Natural killer cell (primary cell): ENCODE measurements at regions of chr13 and their contacts with region 1.

Region 1: GRCh38 chr13:41132512-41133152 is at the start of gene KBTBD6:
- DNase-seq: peak; percentile 86 to 95
- ATAC-seq: peak; percentile 97 to 99 (median 98)
- H3K4me3 ChIP-seq: peak within 1 kb of the TSS; percentile 96
- H3K4me3 Mint-ChIP-seq: peak within 1 kb of the TSS; percentile 98
- H3K27ac ChIP-seq: peak within 1 kb of the TSS; percentile 72
- H3K27ac Mint-ChIP-seq: peak within 1 kb of the TSS; percentile 93 to 96
- H3K4me1 ChIP-seq: peaks cover 14% of the 10 kb centered on the region
- H3K4me1 Mint-ChIP-seq: peaks cover 40 to 41% of the 10 kb centered on the region in 2 donors
- H3K27me3 ChIP-seq: no peaks in the 10 kb centered on the region
- H3K27me3 Mint-ChIP-seq: no peaks in the 10 kb centered on the region
- CTCF ChIP-seq: no peak
- total RNA-seq, gene KBTBD6: 1.7 to 3.2 (median 3.1) TPM

Region 2: DNA sequence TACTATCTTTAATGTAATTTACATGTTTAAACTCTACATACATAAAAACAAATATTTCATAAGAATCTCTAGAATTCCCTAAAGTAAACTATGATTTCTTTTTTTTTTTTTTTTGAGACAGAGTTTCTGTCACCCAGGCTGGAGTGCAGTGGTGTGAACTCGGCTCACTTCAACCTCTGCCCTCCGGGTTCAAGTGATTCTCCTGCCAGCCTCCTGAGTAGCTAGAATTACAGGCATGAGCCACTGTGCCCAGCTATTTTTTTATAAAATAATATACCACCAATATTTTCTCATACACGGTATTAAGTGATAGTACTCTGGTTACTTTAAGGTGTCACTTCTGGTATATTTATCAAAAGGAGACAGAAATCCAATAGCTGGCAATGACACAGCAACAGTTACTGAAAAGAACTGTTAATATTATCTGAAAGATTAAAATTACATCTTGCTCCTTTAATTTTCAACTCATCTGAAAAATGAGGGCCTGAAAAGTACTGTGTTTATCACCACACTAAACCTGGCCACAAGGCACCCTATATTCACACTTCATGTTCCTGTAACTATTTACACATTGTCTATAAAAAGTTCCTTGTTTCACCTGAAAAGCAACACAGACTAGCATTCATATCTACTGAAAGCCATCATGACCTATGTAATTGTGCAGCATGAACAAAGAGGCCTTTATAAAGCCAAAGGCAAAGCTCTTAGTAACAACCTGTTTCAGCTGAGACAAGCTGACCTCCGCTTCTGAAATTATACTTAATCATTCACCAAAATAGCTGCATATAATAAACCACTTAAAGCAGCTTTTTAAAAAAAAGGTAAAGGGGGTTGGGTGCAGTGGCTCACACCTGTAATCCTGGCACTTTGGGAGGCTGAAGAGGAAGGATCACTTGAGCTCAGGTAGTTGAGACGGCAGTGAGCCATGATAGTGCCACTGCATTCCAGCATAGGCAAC is 237.1 kb before region 1 on chr13:
- intact Hi-C with region 1: no loop called
- DNase-seq: no peak
- ATAC-seq: peak in 2 of 3 donors; percentile 21 to 33
- H3K4me3 ChIP-seq: no peak overlapping the region
- H3K4me3 Mint-ChIP-seq: no peak overlapping the region
- H3K27ac ChIP-seq: no peak overlapping the region
- H3K27ac Mint-ChIP-seq: peak overlapping the region; percentile 31 to 50
- H3K4me1 ChIP-seq: no peaks in the 10 kb centered on the region
- H3K4me1 Mint-ChIP-seq: peaks cover 14 to 16% of the 10 kb centered on the region in 2 donors
- H3K27me3 ChIP-seq: no peaks in the 10 kb centered on the region
- H3K27me3 Mint-ChIP-seq: no peaks in the 10 kb centered on the region
- CTCF ChIP-seq: no peak

Region 3: GRCh38 chr13:41193919-41194824 is 61.5 kb after region 1 on chr13 and contains the start of gene KBTBD7:
- intact Hi-C with region 1: loop called (anchors 1 kb)
- DNase-seq: peak; percentile 82 to 91
- ATAC-seq: peak; percentile 95 to 99 (median 98)
- H3K4me3 ChIP-seq: peak within 1 kb of the TSS; percentile 59
- H3K4me3 Mint-ChIP-seq: peak within 1 kb of the TSS; percentile 97
- H3K27ac ChIP-seq: peak within 1 kb of the TSS; percentile 22
- H3K27ac Mint-ChIP-seq: peak within 1 kb of the TSS; percentile 78 to 93
- H3K4me1 ChIP-seq: peaks cover 12% of the 10 kb centered on the region
- H3K4me1 Mint-ChIP-seq: peaks cover 26 to 28% of the 10 kb centered on the region in 2 donors
- H3K27me3 ChIP-seq: no peaks in the 10 kb centered on the region
- H3K27me3 Mint-ChIP-seq: no peaks in the 10 kb centered on the region
- CTCF ChIP-seq: no peak
- total RNA-seq, gene KBTBD7: 2.1 to 4.1 (median 3.8) TPM

Region 4: GRCh38 chr13:41263261-41264027 is 130.8 kb after region 1 on chr13 and contains the start of gene MTRF1:
- intact Hi-C with region 1: loop called (anchors 1 kb)
- DNase-seq: peak; percentile 76 to 89
- ATAC-seq: peak; percentile 92 to 94 (median 93)
- H3K4me3 ChIP-seq: peak within 1 kb of the TSS; percentile 85
- H3K4me3 Mint-ChIP-seq: peak within 1 kb of the TSS; percentile 95
- H3K27ac ChIP-seq: peak within 1 kb of the TSS; percentile 81
- H3K27ac Mint-ChIP-seq: peak within 1 kb of the TSS; percentile 93 to 99
- H3K4me1 ChIP-seq: peaks cover 5% of the 10 kb centered on the region
- H3K4me1 Mint-ChIP-seq: peaks cover 14 to 15% of the 10 kb centered on the region in 2 donors
- H3K27me3 ChIP-seq: no peaks in the 10 kb centered on the region
- H3K27me3 Mint-ChIP-seq: no peaks in the 10 kb centered on the region
- CTCF ChIP-seq: no peak
- total RNA-seq, gene MTRF1: 20.3 to 24.1 (median 24.0) TPM

Region 5: GRCh38 chr13:41310963-41311606 is 178.5 kb after region 1 on chr13 and contains the start of gene NAA16:
- intact Hi-C with region 1: loop called (anchors 1 kb)
- DNase-seq: peak; percentile 93 to 96
- ATAC-seq: peak; percentile 80 to 87 (median 84)
- H3K4me3 ChIP-seq: peak within 1 kb of the TSS; percentile 92
- H3K4me3 Mint-ChIP-seq: peak within 1 kb of the TSS; percentile 96
- H3K27ac ChIP-seq: peak within 1 kb of the TSS; percentile 77
- H3K27ac Mint-ChIP-seq: peak within 1 kb of the TSS; percentile 94 to 96
- H3K4me1 ChIP-seq: peaks cover 26% of the 10 kb centered on the region
- H3K4me1 Mint-ChIP-seq: peaks cover 37 to 41% of the 10 kb centered on the region in 2 donors
- H3K27me3 ChIP-seq: no peaks in the 10 kb centered on the region
- H3K27me3 Mint-ChIP-seq: no peaks in the 10 kb centered on the region
- CTCF ChIP-seq: no peak
- total RNA-seq, gene NAA16: 49.4 to 55.3 (median 53.1) TPM